Activated CD4-positive, alpha-beta memory T cell treated with anti-CD3 and anti-CD28 coated beads for 36 hours (primary cell): ENCODE measurements at regions of chr17 and their contacts with region 1.

Region 1: DNA sequence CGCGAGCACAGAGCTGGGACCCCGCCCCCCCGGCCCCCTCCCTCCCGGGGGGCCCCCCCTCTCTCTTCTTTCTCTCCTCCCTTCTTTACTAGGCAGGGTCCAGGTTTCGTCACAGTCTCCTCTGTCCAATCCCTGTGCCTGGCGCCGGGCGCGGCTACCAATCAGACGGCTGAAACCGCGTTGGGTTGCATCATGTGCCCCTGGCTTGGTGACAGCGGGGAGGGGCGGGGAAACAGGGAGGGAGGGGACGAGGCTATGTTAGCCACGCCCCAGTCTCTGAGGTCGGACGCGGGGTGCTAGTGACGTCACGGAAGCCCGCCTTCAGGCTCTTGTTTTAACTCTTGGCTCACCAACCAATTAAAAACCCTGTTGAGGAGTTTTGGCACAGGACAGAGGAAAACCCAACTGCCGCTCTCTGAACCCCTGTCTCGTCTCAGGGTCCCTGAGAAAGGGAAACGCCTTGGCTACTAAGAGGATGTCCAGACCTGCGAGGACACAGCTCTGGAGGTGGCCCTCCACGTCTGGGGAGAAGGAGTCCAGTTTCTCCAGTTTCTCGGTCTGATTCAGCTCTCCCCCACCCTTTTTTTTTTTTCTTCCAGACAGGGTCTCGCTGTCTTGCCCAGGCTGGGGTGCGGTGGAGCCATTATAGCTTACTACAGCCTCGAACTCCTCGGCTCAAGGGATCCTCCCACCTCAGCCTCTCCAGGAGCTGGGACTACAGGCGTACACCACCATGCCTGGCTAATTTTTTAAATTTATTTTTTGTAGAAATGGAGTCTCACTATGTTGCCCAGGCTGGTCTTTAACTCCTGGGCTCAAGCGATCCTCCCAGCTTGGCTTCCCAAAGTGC is 439 bp upstream of the PLEKHH3 start:
- DNase-seq: peak; percentile 100
- H3K4me3 Mint-ChIP-seq: peak overlapping the region; percentile 76
- H3K27ac Mint-ChIP-seq: peak overlapping the region; percentile 71
- H3K4me1 Mint-ChIP-seq: peaks cover 54% of the 10 kb centered on the region
- H3K27me3 Mint-ChIP-seq: peaks cover 41% of the 10 kb centered on the region

Region 2: GRCh38 chr17:42536048-42536371 is 141.2 kb before region 1 on chr17 and contains the start of gene NAGLU:
- CTCF ChIA-PET with region 1: no interaction called
- POLR2A ChIA-PET with region 1: no interaction called
- intact Hi-C with region 1: loop called (anchors 5 kb)
- DNase-seq: peak; percentile 91
- H3K4me3 Mint-ChIP-seq: peak within 1 kb of the TSS; percentile 87
- H3K27ac Mint-ChIP-seq: peak within 1 kb of the TSS; percentile 74
- H3K4me1 Mint-ChIP-seq: peaks cover 32% of the 10 kb centered on the region
- H3K27me3 Mint-ChIP-seq: peaks cover 4% of the 10 kb centered on the region
- total RNA-seq, gene NAGLU: 12.2 to 13.9 TPM

Region 3: GRCh38 chr17:42609182-42609813 is 67.9 kb before region 1 on chr17 and contains the starts of genes RETREG3 and TUBG1:
- CTCF ChIA-PET with region 1: interaction called, 17 read pairs
- POLR2A ChIA-PET with region 1: interaction called, 3 read pairs
- intact Hi-C with region 1: loop called (anchors 1 kb)
- DNase-seq: peak; percentile 100
- H3K4me3 Mint-ChIP-seq: peak within 1 kb of the TSS; percentile 99
- H3K27ac Mint-ChIP-seq: peak within 1 kb of the TSS; percentile 91
- H3K4me1 Mint-ChIP-seq: peaks cover 41% of the 10 kb centered on the region
- H3K27me3 Mint-ChIP-seq: no peaks in the 10 kb centered on the region
- total RNA-seq, gene RETREG3: 33.7 to 35.3 TPM
- total RNA-seq, gene TUBG1: 92.6 to 101 TPM

Region 4: GRCh38 chr17:42704837-42705494 is 27.7 kb after region 1 on chr17:
- CTCF ChIA-PET with region 1: no interaction called
- POLR2A ChIA-PET with region 1: no interaction called
- intact Hi-C with region 1: loop called (anchors 2 kb)
- DNase-seq: peak; percentile 73
- H3K4me3 Mint-ChIP-seq: no peak overlapping the region
- H3K27ac Mint-ChIP-seq: peak overlapping the region; percentile 18
- H3K4me1 Mint-ChIP-seq: peaks cover 46% of the 10 kb centered on the region
- H3K27me3 Mint-ChIP-seq: no peaks in the 10 kb centered on the region

Region 5: GRCh38 chr17:42744806-42745617 is 67.8 kb after region 1 on chr17 and contains the start of gene EZH1:
- CTCF ChIA-PET with region 1: no interaction called
- POLR2A ChIA-PET with region 1: no interaction called
- intact Hi-C with region 1: loop called (anchors 2 kb)
- DNase-seq: peak; percentile 95
- H3K4me3 Mint-ChIP-seq: peak within 1 kb of the TSS; percentile 95
- H3K27ac Mint-ChIP-seq: peak within 1 kb of the TSS; percentile 94
- H3K4me1 Mint-ChIP-seq: peaks cover 20% of the 10 kb centered on the region
- H3K27me3 Mint-ChIP-seq: peaks cover 8% of the 10 kb centered on the region
- total RNA-seq, gene EZH1: 29.7 to 33.9 TPM